ENCODE measurements at regions of chr3 and their contacts with region 1.

Region 1: DNA sequence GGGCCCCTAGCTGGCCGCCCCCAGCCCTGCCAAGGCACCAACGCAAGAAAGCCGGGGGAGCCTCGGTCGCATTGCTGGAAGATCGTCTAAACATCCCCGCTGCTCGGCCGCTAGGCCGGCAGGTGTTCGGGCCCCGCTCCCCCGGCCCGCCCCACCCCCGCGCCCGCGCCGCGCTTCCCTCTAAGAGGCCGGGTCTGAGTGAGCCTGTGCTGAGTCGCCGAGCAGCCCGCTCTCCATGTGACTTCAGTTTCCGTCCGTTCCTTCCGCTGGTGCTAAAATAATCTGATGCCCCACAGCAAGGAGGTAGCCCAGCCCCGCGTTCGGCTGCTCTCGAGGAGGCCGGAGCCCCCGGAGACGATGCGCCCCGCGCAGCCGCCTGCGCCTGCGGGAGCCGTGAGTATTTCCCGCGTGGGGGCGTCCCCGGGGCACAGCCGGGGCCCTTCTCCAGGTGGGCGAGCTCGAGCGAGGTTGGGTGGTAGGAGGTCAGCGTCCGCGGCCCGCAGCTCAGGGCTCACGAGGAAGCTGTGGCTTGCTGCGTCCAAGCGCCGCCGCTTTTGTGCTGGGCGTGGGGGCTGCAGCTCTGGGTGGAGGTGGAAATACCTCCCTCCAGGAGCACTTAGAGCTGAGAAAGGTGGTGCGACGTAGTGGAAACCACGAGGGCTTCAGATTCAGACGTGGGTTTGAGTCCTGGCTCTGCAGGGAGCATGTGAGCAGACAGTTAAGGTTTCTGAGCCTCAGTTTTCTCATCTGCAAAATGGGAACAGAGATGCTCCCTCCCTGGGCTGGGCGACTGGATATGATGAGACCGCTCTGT is at the start of gene NRROS:
- DNase-seq: peak; percentile 67
- ATAC-seq: peak; percentile 51
- H3K4me3 Mint-ChIP-seq: peak within 1 kb of the TSS; percentile 90
- H3K27ac Mint-ChIP-seq: peak within 1 kb of the TSS; percentile 99
- H3K4me1 Mint-ChIP-seq: peaks cover 78% of the 10 kb centered on the region
- H3K27me3 Mint-ChIP-seq: no peaks in the 10 kb centered on the region
- CTCF ChIP-seq: no peak
- total RNA-seq, gene NRROS: 88.5 and 92.4 TPM in 2 replicates

Region 2: GRCh38 chr3:196624067-196624790 is 15.5 kb before region 1 on chr3:
- CTCF ChIA-PET with region 1: interaction called, 3 read pairs
- POLR2A ChIA-PET with region 1: interaction called, 176 read pairs
- intact Hi-C with region 1: loop called (anchors 2 kb)
- DNase-seq: no peak
- ATAC-seq: peak; percentile 85
- H3K4me3 Mint-ChIP-seq: peak overlapping the region; percentile 77
- H3K27ac Mint-ChIP-seq: peak overlapping the region; percentile 90
- H3K4me1 Mint-ChIP-seq: peaks cover 21% of the 10 kb centered on the region
- H3K27me3 Mint-ChIP-seq: no peaks in the 10 kb centered on the region
- CTCF ChIP-seq: no peak

Region 3: GRCh38 chr3:196684548-196685407 is 45.1 kb after region 1 on chr3:
- CTCF ChIA-PET with region 1: interaction called, 7 read pairs
- POLR2A ChIA-PET with region 1: interaction called, 22 read pairs
- intact Hi-C with region 1: loop called (anchors 1 kb)
- DNase-seq: peak; percentile 49
- ATAC-seq: peak; percentile 90
- H3K4me3 Mint-ChIP-seq: peak overlapping the region; percentile 66
- H3K27ac Mint-ChIP-seq: peak overlapping the region; percentile 60
- H3K4me1 Mint-ChIP-seq: peaks cover 30% of the 10 kb centered on the region
- H3K27me3 Mint-ChIP-seq: no peaks in the 10 kb centered on the region
- CTCF ChIP-seq: peak; percentile 81

Region 4: GRCh38 chr3:196739671-196740480 is 100.2 kb after region 1 on chr3 and contains the start of gene PAK2:
- CTCF ChIA-PET with region 1: no interaction called
- POLR2A ChIA-PET with region 1: interaction called, 11 read pairs
- intact Hi-C with region 1: loop called (anchors 1 kb)
- DNase-seq: peak; percentile 86
- ATAC-seq: peak; percentile 92
- H3K4me3 Mint-ChIP-seq: peak within 1 kb of the TSS; percentile 100
- H3K27ac Mint-ChIP-seq: peak within 1 kb of the TSS; percentile 99
- H3K4me1 Mint-ChIP-seq: peaks cover 33% of the 10 kb centered on the region
- H3K27me3 Mint-ChIP-seq: no peaks in the 10 kb centered on the region
- CTCF ChIP-seq: no peak
- total RNA-seq, gene PAK2: 73.7 and 87.1 TPM in 2 replicates